ENCODE measurements at regions of chr3 and their contacts with region 1.

Region 1: GRCh38 chr3:112111785-112112402 is 21.2 kb downstream of the GCSAM start:
- DNase-seq: peak; percentile 60
- H3K4me3 ChIP-seq: no peak overlapping the region
- H3K27ac ChIP-seq: no peak overlapping the region
- H3K4me1 ChIP-seq: peaks cover 0 to 8% (median 1%) of the 10 kb centered on the region in 4 donors
- H3K27me3 ChIP-seq: no peaks in the 10 kb centered on the region
- CTCF ChIP-seq: peak; percentile 54 to 65 (median 64)
- EP300 ChIP-seq: no peak
- POLR2A ChIP-seq: no peak

Region 2: GRCh38 chr3:111215481-111215880 is 896.4 kb before region 1 on chr3:
- in situ Hi-C with region 1: no loop called
- intact Hi-C with region 1: no loop called
- DNase-seq: no peak
- H3K4me3 ChIP-seq: no peak overlapping the region
- H3K27ac ChIP-seq: no peak overlapping the region
- H3K4me1 ChIP-seq: no peaks in the 10 kb centered on the region
- H3K27me3 ChIP-seq: no peaks in the 10 kb centered on the region
- CTCF ChIP-seq: no peak
- EP300 ChIP-seq: no peak
- POLR2A ChIP-seq: no peak

Region 3: GRCh38 chr3:112293368-112294321 is 181.8 kb after region 1 on chr3 and contains the start of gene SLC9C1:
- in situ Hi-C with region 1: loop called in 1 of 4 experiments (anchors 25 kb)
- intact Hi-C with region 1: no loop called
- DNase-seq: peak; percentile 40
- H3K4me3 ChIP-seq: peak within 1 kb of the TSS; percentile 11 to 56 (median 32)
- H3K27ac ChIP-seq: peak within 1 kb of the TSS; percentile 79 to 83 (median 80)
- H3K4me1 ChIP-seq: peaks cover 0 to 4% (median 0%) of the 10 kb centered on the region in 4 donors
- H3K27me3 ChIP-seq: no peaks in the 10 kb centered on the region
- CTCF ChIP-seq: peak; percentile 48 to 65 (median 55)
- EP300 ChIP-seq: no peak
- POLR2A ChIP-seq: no peak
- total RNA-seq, gene SLC9C1: not detected

Measured in transverse colon (tissue), 4 donors.